K562 (cell line): ENCODE measurements at regions of chr15 and their contacts with region 1.

Region 1: GRCh38 chr15:63896336-63897115 is 62.8 kb upstream of the HERC1 start:
- DNase-seq: peak; percentile 85 to 98 (median 89)
- ATAC-seq: peak; percentile 75
- H3K4me3 ChIP-seq: no peak overlapping the region
- H3K27ac ChIP-seq: peak overlapping the region; percentile 94
- H3K4me1 ChIP-seq: peaks cover 68 to 76% of the 10 kb centered on the region in 2 experiments
- H3K27me3 ChIP-seq: no peaks in the 10 kb centered on the region
- CTCF ChIP-seq: no peak
- EP300 ChIP-seq: peak; percentile 92
- POLR2A ChIP-seq: no peak
- RAD21 ChIP-seq: peak; percentile 27 to 29; a peak in 2 of 4 replicates

Region 2: DNA sequence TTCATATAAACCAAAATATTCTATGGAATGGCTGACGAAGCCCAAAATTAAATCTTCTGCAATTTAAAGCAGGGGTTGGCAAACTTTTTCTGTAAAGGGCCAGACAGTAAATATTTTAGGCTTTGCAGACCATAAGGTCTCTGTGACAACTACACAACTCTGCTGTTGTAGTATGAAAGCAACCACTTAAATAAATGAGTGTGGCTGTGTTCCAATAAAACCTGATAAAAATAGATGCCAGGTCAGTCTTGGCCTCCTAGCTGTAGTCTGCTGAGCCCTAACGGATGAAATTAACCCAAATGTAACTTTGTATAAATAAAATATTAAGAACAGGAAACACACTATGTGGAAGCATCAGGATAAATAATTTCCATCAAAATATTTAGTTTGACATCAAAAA is 195.2 kb before region 1 on chr15:
- CTCF ChIA-PET with region 1: no interaction called
- POLR2A ChIA-PET with region 1: no interaction called
- in situ Hi-C with region 1: no loop called
- intact Hi-C with region 1: no loop called
- DNase-seq: no peak
- ATAC-seq: no peak
- H3K4me3 ChIP-seq: no peak overlapping the region
- H3K27ac ChIP-seq: no peak overlapping the region
- H3K4me1 ChIP-seq: no peaks in the 10 kb centered on the region
- H3K27me3 ChIP-seq: no peaks in the 10 kb centered on the region
- CTCF ChIP-seq: no peak
- EP300 ChIP-seq: no peak
- POLR2A ChIP-seq: no peak
- RAD21 ChIP-seq: no peak

Region 3: DNA sequence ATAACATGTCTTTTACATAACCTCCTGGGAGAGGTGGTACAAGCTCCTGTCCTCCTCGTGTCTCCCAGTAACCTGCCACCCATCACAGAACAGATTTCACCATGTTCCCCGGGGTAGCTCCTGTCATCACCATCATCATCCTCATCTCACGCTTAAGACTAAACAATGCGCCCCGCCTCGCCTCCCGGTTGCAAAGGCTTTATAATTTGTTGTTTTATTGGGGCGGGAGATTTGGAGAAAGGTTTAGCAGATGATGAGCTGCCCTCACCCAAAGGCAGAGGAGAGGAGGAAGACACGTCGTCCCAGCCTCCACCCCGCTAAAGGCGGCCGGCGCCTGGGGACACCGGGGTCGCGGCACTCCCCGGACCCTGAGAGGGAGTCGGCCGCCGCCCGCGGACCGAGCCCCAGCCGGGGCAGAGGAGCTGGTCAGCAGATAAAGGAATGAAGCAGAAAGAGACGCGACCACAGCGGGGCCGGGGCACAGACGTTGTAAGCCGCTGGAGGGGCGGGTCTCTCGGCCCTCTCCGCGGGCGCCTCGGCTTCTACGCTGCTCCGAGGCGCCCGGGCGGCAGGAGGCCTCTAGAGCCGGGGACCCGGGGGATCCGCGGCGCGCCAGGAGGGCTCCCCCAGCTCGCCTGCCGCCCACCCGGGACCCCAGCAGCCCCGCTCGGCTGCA is 63.4 kb before region 1 on chr15:
- CTCF ChIA-PET with region 1: no interaction called
- POLR2A ChIA-PET with region 1: interaction called, 3 read pairs
- in situ Hi-C with region 1: no loop called
- intact Hi-C with region 1: loop called (anchors 1 kb)
- DNase-seq: peak; percentile 63 to 68 (median 65)
- ATAC-seq: peak; percentile 79
- H3K4me3 ChIP-seq: peak overlapping the region; percentile 61
- H3K27ac ChIP-seq: peak overlapping the region; percentile 98
- H3K4me1 ChIP-seq: peaks cover 32 to 39% of the 10 kb centered on the region in 2 experiments
- H3K27me3 ChIP-seq: no peaks in the 10 kb centered on the region
- CTCF ChIP-seq: no peak
- EP300 ChIP-seq: no peak
- POLR2A ChIP-seq: no peak
- RAD21 ChIP-seq: no peak

Region 4: DNA sequence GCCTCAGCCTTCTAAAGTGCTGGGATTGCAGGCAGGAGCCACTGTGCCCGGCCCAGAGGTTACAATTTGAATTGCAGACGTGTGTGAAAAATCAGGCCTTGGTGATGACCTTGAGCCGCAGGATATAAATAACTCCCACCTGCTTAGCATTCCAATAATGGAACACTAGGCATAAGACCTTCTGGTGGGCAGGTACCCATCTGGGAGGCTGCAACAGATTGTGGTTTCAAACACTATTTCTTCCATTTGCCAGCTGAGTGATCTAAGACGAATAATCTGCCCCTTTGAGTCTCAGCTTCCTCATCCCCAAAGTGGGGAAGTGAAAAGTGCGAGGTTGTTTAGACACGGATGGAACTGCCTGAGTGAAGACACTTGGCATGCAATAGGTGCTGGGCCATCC is 15.1 kb before region 1 on chr15:
- CTCF ChIA-PET with region 1: no interaction called
- POLR2A ChIA-PET with region 1: interaction called, 17 read pairs
- in situ Hi-C with region 1: no loop called
- intact Hi-C with region 1: no loop called
- DNase-seq: no peak
- ATAC-seq: no peak
- H3K4me3 ChIP-seq: no peak overlapping the region
- H3K27ac ChIP-seq: no peak overlapping the region
- H3K4me1 ChIP-seq: peaks cover 3 to 5% of the 10 kb centered on the region in 2 experiments; a peak in 2 of 5 replicates
- H3K27me3 ChIP-seq: no peaks in the 10 kb centered on the region
- CTCF ChIP-seq: no peak
- EP300 ChIP-seq: no peak
- POLR2A ChIP-seq: no peak
- RAD21 ChIP-seq: no peak

Region 5: DNA sequence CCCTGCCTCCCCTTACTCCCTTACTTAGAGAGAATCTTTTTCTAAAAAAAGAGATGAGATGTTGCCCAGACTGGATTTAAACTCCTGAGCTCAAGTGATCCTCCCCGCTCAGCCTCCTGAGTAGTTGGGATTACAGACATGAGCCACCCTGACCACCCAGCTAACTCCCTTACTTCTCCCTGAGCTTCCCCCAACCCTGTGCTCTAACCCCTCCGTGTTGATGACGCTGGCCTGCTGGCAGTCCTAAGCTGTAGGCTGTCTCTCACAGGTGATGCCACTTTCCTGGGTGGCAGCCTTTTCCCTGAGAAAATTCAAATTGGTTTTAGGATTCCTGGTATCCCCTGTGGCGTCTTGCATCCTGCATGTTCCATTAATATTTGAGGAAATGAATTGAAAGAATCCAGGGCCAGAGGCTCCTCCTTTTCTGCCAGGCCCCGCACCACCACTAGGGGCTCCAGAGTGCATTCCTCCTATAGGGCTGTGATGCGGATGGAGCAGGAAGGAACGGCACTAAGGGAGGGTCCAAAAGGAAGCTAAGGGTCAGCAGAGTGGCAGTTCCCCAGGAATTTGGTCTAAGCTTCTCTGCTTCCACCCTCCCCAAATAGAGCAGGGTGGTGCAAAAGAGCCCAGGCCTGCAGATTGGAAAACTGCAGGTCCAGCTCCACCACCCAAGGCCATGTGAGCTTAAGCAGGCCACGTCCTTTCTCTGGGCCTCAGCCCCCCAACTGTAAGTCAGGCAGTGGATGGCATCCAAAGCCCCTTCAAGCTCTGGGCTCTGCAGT is 48.7 kb after region 1 on chr15:
- CTCF ChIA-PET with region 1: no interaction called
- POLR2A ChIA-PET with region 1: interaction called, 3 read pairs
- in situ Hi-C with region 1: no loop called
- intact Hi-C with region 1: loop called (anchors 5 kb)
- DNase-seq: peak; percentile 82 to 87 (median 84)
- ATAC-seq: peak; percentile 97
- H3K4me3 ChIP-seq: no peak overlapping the region
- H3K27ac ChIP-seq: no peak overlapping the region
- H3K4me1 ChIP-seq: peaks cover 4 to 8% of the 10 kb centered on the region in 2 experiments; a peak in 3 of 5 replicates
- H3K27me3 ChIP-seq: no peaks in the 10 kb centered on the region
- CTCF ChIP-seq: peak; percentile 86 to 96 (median 94)
- EP300 ChIP-seq: 0 out of 2 replicates have a peak, but pooled peaks have one; percentile 12
- POLR2A ChIP-seq: no peak
- RAD21 ChIP-seq: peak; percentile 62 to 64

Region 6: GRCh38 chr15:63970621-63971426 is 74.3 kb after region 1 on chr15:
- CTCF ChIA-PET with region 1: no interaction called
- POLR2A ChIA-PET with region 1: no interaction called
- in situ Hi-C with region 1: no loop called
- intact Hi-C with region 1: no loop called
- DNase-seq: no peak
- ATAC-seq: peak; percentile 36
- H3K4me3 ChIP-seq: no peak overlapping the region
- H3K27ac ChIP-seq: peak overlapping the region; percentile 33; the same call in 1 of the 3 replicates
- H3K4me1 ChIP-seq: peaks cover 6 to 25% of the 10 kb centered on the region in 2 experiments
- H3K27me3 ChIP-seq: no peaks in the 10 kb centered on the region
- CTCF ChIP-seq: no peak
- EP300 ChIP-seq: no peak
- POLR2A ChIP-seq: no peak
- RAD21 ChIP-seq: no peak